Activated naive CD4-positive, alpha-beta T cell treated with anti-CD3 and anti-CD28 coated beads for 36 hours (primary cell): ENCODE measurements at regions of chr7 and their contacts with region 1.

Region 1: DNA sequence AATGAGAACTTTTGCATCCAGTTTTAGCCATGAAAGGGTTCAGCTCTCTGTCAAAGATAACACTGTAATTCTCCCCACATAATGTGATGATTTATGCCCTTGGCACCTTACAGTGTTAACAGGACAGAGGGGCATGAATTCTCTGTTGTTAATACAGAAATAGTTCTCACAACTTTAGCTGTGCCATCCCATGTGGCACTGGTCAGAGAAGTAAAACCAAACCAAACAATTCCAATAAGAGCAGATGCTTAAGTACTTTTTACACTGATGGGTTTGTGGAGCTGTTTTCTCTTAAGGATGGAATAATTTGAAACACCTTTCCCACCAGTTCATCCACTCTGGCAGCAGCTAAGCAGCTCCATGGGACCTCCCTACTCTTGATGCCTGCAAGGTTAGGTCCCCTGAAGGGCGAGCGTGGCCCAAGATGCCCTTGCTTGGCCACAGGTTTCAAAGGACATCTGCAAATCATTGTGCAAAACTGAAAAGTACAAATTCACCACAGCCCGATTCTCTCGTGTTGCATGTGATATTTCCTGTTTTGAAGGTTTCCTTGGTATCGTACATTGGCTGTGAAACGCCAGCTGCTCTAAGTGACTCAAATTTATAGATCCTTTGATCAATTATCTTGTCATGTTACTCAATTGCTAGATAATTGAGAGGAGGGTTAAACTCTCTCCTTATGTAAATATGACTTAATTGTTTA is 82.5 kb upstream of the CREB5 start:
- DNase-seq: peak; percentile 25
- H3K4me3 Mint-ChIP-seq: no peak overlapping the region
- H3K27ac Mint-ChIP-seq: no peak overlapping the region
- H3K4me1 Mint-ChIP-seq: peaks cover 40% of the 10 kb centered on the region
- H3K27me3 Mint-ChIP-seq: peaks cover 3% of the 10 kb centered on the region

Region 2: DNA sequence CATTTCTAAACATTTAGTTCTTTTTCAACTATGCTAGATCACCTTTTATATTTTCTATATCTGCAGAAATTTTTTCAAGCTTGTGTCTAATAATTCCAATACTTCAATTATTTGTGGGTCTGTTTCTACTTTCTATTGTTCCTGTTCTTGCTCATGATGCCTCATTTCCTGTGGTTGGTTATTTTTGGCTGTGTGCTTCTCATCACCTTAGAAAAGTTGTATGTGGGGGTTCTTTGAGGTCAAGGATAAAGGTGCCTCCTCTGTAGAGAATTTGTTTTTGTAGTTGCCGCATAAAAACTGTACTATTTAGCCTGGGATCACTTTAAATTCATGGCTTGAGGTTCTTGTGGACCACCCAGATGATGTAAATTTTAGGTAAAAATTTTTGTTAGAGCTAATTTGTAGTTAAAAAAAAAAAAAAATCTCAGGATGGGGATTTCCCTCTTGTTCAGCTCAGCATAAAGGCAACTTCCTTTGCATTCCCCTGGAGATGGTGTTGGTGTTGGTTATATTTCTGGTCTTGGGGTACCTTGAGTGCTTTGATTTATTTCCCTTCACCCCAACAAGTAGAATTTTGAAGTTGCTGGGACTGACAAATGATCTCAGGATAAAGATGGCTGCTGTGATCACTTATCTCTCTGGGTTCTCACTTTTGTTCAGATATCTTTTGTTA is 122.2 kb before region 1 on chr7:
- CTCF ChIA-PET with region 1: no interaction called
- intact Hi-C with region 1: loop called (anchors 1 kb)
- DNase-seq: peak; percentile 30
- H3K4me3 Mint-ChIP-seq: no peak overlapping the region
- H3K27ac Mint-ChIP-seq: peak overlapping the region; percentile 43
- H3K4me1 Mint-ChIP-seq: peaks cover 39% of the 10 kb centered on the region
- H3K27me3 Mint-ChIP-seq: peaks cover 7% of the 10 kb centered on the region

Region 3: GRCh38 chr7:28239823-28240204 is 90.0 kb before region 1 on chr7:
- CTCF ChIA-PET with region 1: no interaction called
- intact Hi-C with region 1: loop called (anchors 1 kb)
- DNase-seq: peak; percentile 6
- H3K4me3 Mint-ChIP-seq: no peak overlapping the region
- H3K27ac Mint-ChIP-seq: no peak overlapping the region
- H3K4me1 Mint-ChIP-seq: peaks cover 9% of the 10 kb centered on the region
- H3K27me3 Mint-ChIP-seq: peaks cover 48% of the 10 kb centered on the region

Region 4: GRCh38 chr7:28292834-28293526 is 36.8 kb before region 1 on chr7:
- CTCF ChIA-PET with region 1: interaction called, 9 read pairs
- intact Hi-C with region 1: loop called (anchors 1 kb)
- DNase-seq: peak; percentile 39
- H3K4me3 Mint-ChIP-seq: no peak overlapping the region
- H3K27ac Mint-ChIP-seq: no peak overlapping the region
- H3K4me1 Mint-ChIP-seq: peaks cover 20% of the 10 kb centered on the region
- H3K27me3 Mint-ChIP-seq: peaks cover 25% of the 10 kb centered on the region

Region 5: DNA sequence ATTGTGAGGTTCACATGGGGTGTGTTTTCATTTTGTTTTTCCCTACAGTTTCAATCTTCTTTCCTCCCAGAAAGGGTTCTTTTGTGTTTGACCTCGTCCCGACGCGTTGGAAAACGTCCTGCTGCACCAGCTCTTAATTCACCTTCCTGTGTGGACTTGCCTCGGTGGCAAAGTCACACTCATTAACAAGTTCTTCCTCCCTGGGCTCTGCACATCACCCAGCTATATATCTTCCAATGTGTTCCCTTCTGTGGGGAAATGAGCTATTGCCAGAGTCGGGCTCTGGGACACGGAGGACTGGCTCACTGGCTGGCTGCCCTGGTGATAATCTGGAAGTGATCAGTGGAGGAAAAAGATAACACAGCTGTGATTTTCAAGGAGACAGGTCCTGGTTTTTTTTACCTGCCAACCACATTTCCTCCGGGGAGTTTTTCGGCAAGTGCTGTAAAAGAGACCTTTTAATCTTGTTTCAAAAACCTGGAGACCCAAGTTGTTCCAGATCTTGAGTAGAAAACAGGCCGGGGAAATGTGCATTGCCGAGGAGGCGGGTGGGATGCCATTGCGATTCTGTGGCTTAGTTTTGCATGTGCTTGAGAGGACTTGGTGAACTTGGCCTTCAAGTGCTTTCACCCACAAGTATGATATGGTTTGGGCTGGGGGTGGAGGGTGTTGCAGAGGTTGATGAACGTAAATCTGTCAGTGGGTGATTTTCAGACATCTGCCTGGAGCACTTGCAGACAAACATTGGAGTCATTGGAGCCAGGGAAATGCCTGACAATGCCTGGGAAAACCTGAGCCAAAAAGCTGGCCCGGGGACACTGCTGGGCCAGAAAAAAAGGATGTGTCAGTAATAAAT is 14.0 kb before region 1 on chr7:
- CTCF ChIA-PET with region 1: no interaction called
- intact Hi-C with region 1: loop called (anchors 1 kb)
- DNase-seq: no peak
- H3K4me3 Mint-ChIP-seq: no peak overlapping the region
- H3K27ac Mint-ChIP-seq: no peak overlapping the region
- H3K4me1 Mint-ChIP-seq: peaks cover 3% of the 10 kb centered on the region
- H3K27me3 Mint-ChIP-seq: peaks cover 45% of the 10 kb centered on the region

Region 6: GRCh38 chr7:28408960-28409715 is 79.3 kb after region 1 on chr7:
- CTCF ChIA-PET with region 1: no interaction called
- intact Hi-C with region 1: loop called (anchors 1 kb)
- DNase-seq: peak; percentile 88
- H3K4me3 Mint-ChIP-seq: peak overlapping the region; percentile 80
- H3K27ac Mint-ChIP-seq: no peak overlapping the region
- H3K4me1 Mint-ChIP-seq: peaks cover 39% of the 10 kb centered on the region
- H3K27me3 Mint-ChIP-seq: peaks cover 67% of the 10 kb centered on the region